Tibial artery (tissue), 4 donors: ENCODE measurements at regions of chr6 and their contacts with region 1.

Region 1: GRCh38 chr6:99393698-99394531 is at the start of gene COQ3:
- DNase-seq: peak; percentile 51 to 74
- H3K4me3 ChIP-seq: peak within 1 kb of the TSS; percentile 86
- H3K27ac ChIP-seq: peak within 1 kb of the TSS; percentile 84 to 89
- H3K4me1 ChIP-seq: peaks cover 0 to 6% (median 0%) of the 10 kb centered on the region in 4 donors
- H3K27me3 ChIP-seq: no peaks in the 10 kb centered on the region
- CTCF ChIP-seq: no peak

Region 2: DNA sequence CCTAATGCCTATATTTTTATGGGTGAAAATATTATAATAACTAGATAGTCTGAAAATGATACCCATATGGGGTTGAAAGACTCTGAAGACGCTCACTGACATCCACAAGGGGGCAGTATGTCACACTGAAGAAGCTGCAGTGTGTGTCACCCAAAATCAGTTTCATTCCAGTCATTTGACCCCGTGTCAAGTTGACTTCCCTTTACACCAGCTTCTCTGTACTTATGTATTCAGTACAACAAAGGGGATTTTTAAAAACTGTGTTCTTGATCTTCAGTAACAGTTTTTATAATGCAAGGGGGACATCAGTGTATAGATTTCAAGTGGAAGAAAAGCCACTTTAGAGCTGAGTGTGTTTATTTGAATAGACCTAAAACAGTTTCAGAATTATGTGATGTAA is 63.8 kb before region 1 on chr6:
- intact Hi-C with region 1: loop called (anchors 5 kb)
- DNase-seq: peak in 1 of 2 donors; percentile 44
- H3K4me3 ChIP-seq: no peak overlapping the region
- H3K27ac ChIP-seq: no peak overlapping the region
- H3K4me1 ChIP-seq: no peaks in the 10 kb centered on the region
- H3K27me3 ChIP-seq: no peaks in the 10 kb centered on the region
- CTCF ChIP-seq: peak; percentile 39 to 61

Region 3: GRCh38 chr6:99369533-99369932 is 24.4 kb before region 1 on chr6:
- intact Hi-C with region 1: no loop called
- DNase-seq: no peak
- H3K4me3 ChIP-seq: no peak overlapping the region
- H3K27ac ChIP-seq: no peak overlapping the region
- H3K4me1 ChIP-seq: no peaks in the 10 kb centered on the region
- H3K27me3 ChIP-seq: no peaks in the 10 kb centered on the region
- CTCF ChIP-seq: no peak

Region 4: GRCh38 chr6:99645986-99646385 is 252.1 kb after region 1 on chr6:
- intact Hi-C with region 1: no loop called
- DNase-seq: no peak
- H3K4me3 ChIP-seq: no peak overlapping the region
- H3K27ac ChIP-seq: no peak overlapping the region
- H3K4me1 ChIP-seq: no peaks in the 10 kb centered on the region
- H3K27me3 ChIP-seq: no peaks in the 10 kb centered on the region
- CTCF ChIP-seq: no peak